Activated CD4-positive, alpha-beta T cell treated with anti-CD3 and anti-CD28 coated beads for 36 hours (primary cell): ENCODE measurements at regions of chr22 and their contacts with region 1.

Region 1: DNA sequence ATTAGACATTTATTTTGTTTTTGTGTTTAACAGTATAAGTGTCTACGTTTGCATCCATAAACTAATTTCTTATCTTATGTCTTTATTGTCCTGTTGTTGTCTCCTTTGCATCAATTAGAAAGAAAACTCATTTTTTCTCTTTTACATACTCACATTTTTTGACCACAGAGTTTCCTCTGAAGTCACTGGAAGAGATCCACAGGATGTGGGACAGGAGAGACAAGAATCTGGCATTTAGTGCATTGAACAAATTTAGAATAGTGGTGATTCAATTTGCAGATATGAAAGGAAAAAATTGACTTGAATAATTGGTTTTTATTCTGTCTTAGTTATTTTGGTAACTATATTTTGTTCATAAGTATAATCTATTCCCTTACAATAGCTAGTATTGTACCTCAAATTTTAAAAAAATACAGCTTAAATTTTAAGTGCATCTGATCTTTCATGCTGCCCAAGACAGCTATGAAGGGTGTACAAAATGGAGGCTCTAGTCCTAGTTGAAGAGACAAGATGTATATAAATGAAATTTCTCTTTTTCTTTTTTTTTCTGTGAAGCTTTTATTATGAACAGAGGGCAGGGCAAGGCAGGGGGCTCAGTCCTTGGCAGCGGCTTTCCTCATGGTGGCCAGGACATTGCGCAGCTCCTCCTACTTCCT is 24.4 kb downstream of the HORMAD2 start:
- DNase-seq: no peak
- ATAC-seq: peak; percentile 81
- H3K4me3 Mint-ChIP-seq: no peak overlapping the region
- H3K27ac Mint-ChIP-seq: peak overlapping the region; percentile 44
- H3K4me1 Mint-ChIP-seq: peaks cover 43% of the 10 kb centered on the region
- H3K27me3 Mint-ChIP-seq: no peaks in the 10 kb centered on the region

Region 2: DNA sequence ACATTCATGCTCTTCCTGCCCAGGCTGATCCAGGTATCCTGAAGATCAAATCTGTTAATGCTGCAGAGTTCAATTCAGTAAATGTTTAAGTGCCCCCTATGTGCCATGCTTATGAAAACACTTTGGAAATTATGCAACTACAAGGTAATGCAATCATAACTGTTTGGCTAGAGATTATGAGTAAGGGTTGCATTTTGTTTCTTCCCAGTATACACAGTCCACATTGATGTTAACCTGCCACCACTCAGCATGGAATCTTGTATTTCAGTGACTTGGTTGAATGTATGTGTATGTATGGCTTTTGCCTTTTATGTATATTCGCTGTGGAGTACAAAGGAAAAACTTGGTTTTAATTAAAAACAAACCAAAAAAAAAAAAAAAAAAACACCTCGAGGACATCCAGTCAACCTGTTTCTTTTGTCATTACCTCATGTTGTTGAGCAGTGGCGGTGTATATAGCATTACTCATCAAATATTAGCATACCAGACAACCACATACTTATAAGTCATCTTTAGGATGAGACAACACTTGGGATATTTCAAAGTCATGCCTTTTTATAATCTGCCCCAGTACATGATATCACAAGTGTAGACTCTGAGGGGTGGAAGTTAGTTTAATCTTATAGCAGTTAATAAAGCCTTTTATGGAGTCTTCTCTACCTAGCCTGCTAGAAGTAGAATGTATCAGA is 110.5 kb before region 1 on chr22:
- CTCF ChIA-PET with region 1: no interaction called
- POLR2A ChIA-PET with region 1: no interaction called
- intact Hi-C with region 1: no loop called
- DNase-seq: no peak
- ATAC-seq: peak; percentile 90
- H3K4me3 Mint-ChIP-seq: no peak overlapping the region
- H3K27ac Mint-ChIP-seq: peak overlapping the region; percentile 28
- H3K4me1 Mint-ChIP-seq: peaks cover 14% of the 10 kb centered on the region
- H3K27me3 Mint-ChIP-seq: no peaks in the 10 kb centered on the region

Region 3: GRCh38 chr22:30121960-30122359 is 17.3 kb after region 1 on chr22:
- CTCF ChIA-PET with region 1: interaction called, 32 read pairs
- POLR2A ChIA-PET with region 1: no interaction called
- intact Hi-C with region 1: no loop called
- DNase-seq: peak; percentile 26
- ATAC-seq: peak; percentile 89
- H3K4me3 Mint-ChIP-seq: no peak overlapping the region
- H3K27ac Mint-ChIP-seq: no peak overlapping the region
- H3K4me1 Mint-ChIP-seq: peaks cover 19% of the 10 kb centered on the region
- H3K27me3 Mint-ChIP-seq: peaks cover 3% of the 10 kb centered on the region

Region 4: DNA sequence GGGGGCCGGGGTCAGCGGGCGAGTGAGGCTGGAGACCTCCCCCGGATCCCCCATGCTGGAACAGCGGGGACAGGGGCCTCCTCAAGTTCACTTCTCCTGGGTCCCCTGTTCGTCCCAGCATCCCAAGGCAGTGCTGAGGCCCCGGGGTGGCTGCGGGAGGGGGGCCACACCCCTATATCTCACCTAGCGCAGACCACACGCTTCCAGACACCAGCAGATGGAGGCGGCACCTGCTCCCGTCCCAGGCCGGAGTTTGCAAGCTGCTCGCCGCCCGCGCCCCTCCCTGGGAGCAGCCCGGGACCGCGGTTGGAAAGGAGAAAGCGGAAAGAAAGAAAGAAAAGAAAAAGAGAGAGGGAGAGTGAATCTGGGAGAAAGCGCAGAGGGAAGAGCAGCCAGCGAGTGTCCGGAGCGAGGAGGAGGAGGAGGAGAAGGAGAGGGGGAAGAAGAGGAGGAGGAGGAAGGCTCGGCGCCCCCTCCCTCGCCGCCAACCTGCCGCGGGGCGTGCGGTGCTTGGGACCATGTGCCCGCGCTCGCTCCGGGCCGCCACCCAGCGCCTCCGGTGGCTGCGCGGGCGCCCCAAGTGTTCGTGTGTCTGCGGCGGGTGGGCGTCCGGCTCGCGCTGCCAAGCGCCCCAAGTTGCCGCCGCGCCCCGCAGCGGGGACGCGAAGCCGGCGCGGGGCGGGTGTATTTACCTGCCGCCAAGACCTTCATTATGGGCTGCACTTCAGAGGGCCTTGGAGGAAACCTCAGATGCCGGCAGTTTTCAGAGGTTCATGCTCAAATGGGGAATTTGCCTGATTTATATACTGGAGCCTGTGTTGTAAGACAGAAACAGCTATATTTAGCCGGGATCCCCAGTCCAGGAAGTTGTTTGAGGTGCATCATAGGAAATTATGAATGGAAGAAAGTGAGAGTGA is 141.6 kb after region 1 on chr22 and contains the start of gene LIF:
- CTCF ChIA-PET with region 1: interaction called, 55 read pairs
- POLR2A ChIA-PET with region 1: no interaction called
- intact Hi-C with region 1: loop called in 1 of 2 experiments (anchors 2 kb)
- DNase-seq: peak; percentile 81
- ATAC-seq: peak; percentile 65
- H3K4me3 Mint-ChIP-seq: peak within 1 kb of the TSS; percentile 99
- H3K27ac Mint-ChIP-seq: peak within 1 kb of the TSS; percentile 97
- H3K4me1 Mint-ChIP-seq: peaks cover 59% of the 10 kb centered on the region
- H3K27me3 Mint-ChIP-seq: no peaks in the 10 kb centered on the region
- total RNA-seq, gene LIF: 77.3 to 105 TPM

Region 5: DNA sequence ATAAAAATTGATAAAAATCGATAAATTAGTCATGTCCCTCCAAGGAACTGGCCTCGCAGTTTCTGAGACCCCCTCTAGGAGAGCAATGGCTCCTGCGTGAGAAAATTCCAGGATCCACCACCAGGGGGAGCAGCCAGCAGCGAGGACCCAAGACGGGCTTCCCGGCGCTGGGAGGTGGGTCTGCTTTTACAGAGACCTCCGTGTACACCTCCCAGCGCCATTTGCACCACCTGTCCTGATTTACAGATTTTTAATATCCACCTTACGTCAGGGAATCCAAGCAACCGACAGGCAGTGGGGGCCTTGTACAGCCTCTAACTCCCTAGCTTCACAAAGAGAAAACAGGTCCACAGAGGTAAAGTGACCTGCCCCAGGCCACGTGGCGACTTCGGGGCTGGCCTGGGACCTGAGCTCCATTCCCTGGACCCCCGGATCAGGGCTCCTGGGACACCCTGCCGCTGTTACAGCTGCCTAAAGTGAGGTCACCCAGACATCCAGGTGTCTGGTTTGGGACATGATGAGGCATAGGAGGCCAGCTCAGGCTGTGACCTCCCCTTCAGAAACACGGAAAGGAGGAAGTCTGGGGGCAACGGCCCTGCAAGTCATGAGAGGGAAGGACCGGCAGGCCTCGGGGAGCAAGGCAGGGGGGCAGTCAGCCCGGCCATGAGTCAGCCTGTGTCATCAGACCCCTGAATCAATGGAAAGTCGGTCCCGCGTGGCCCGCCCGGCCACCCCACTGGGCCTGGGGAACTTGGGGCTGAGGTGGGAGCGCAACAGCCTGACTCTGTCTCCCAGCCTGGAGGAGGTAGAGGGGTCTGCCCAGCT is 158.5 kb after region 1 on chr22:
- CTCF ChIA-PET with region 1: interaction called, 19 read pairs
- POLR2A ChIA-PET with region 1: interaction called, 4 read pairs
- intact Hi-C with region 1: no loop called
- DNase-seq: peak; percentile 88
- ATAC-seq: no peak
- H3K4me3 Mint-ChIP-seq: peak overlapping the region; percentile 62
- H3K27ac Mint-ChIP-seq: peak overlapping the region; percentile 51
- H3K4me1 Mint-ChIP-seq: peaks cover 33% of the 10 kb centered on the region
- H3K27me3 Mint-ChIP-seq: no peaks in the 10 kb centered on the region

Region 6: GRCh38 chr22:30386960-30387827 is 282.6 kb after region 1 on chr22 and contains the start of gene RNF215:
- CTCF ChIA-PET with region 1: interaction called, 4 read pairs
- POLR2A ChIA-PET with region 1: no interaction called
- intact Hi-C with region 1: loop called (anchors 1 to 5 kb)
- DNase-seq: peak; percentile 87
- ATAC-seq: peak; percentile 77
- H3K4me3 Mint-ChIP-seq: peak within 1 kb of the TSS; percentile 73
- H3K27ac Mint-ChIP-seq: peak within 1 kb of the TSS; percentile 9
- H3K4me1 Mint-ChIP-seq: peaks cover 15% of the 10 kb centered on the region
- H3K27me3 Mint-ChIP-seq: no peaks in the 10 kb centered on the region
- total RNA-seq, gene RNF215: 4.3 to 7.4 TPM

Region 7: DNA sequence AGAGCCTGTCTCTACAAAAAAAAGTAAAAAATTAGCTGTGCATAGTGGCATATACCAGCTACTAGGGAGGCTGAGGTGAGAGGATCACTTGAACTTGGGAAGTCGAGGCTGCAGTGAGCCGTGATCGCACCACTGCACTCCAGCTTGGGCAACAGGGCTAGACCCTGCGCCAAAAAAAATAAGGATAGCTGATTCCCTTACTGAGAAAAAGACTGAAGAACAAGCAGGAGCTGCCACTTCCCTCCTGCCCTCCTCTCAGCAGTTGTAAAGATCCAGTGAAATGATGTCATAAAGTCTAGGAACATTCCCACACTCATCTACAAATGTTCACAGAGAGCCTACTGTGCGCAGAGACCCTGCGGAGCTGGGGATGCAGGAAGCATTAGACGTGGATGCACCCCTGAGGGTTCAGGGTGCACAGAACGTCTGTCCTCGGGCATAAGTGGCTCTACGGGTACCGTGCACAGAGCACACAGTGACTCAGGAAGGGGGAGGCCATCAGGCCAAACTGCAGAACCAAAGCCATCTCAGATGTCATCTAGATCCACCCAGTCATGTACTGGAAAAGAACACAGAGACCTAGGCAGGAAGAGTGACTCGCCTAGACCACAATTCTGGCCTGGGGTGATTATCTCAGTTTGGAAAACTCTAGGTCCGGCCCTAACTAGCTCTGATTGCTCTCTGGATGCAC is 303.9 kb after region 1 on chr22:
- CTCF ChIA-PET with region 1: no interaction called
- POLR2A ChIA-PET with region 1: no interaction called
- intact Hi-C with region 1: no loop called
- DNase-seq: no peak
- ATAC-seq: peak; percentile 69
- H3K4me3 Mint-ChIP-seq: no peak overlapping the region
- H3K27ac Mint-ChIP-seq: no peak overlapping the region
- H3K4me1 Mint-ChIP-seq: peaks cover 25% of the 10 kb centered on the region
- H3K27me3 Mint-ChIP-seq: no peaks in the 10 kb centered on the region